Posterior vena cava (tissue), 2 donors: ENCODE measurements at regions of chr4 and their contacts with region 1.

Region 1: GRCh38 chr4:144295286-144295995 is 154.9 kb upstream of the GYPA start:
- DNase-seq: no peak

Region 2: GRCh38 chr4:143438710-143439109 is 856.7 kb before region 1 on chr4:
- intact Hi-C with region 1: loop called in 1 of 2 experiments (anchors 5 kb)
- DNase-seq: no peak

Region 3: GRCh38 chr4:144259285-144259684 is 36.2 kb before region 1 on chr4:
- intact Hi-C with region 1: no loop called
- DNase-seq: no peak

Region 4: DNA sequence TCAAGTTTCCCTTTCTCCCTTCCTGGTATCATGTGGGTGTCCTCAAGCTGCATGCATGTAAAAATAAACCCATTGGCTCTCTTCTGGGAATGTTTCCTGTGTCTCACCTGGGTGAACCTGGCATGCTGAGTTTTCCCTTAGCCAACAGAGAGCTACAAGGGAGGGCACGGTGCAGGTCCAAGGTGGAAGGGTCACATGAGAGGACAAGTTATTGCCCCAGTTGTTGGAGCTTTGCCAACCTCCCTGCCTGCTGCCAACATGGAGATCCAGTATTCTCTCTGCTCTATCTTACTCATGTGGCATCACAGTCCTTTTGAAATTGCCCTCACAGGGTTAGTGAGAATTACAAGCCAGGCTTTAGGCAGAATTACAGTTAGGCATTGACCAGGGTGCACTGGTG is 41.2 kb after region 1 on chr4:
- intact Hi-C with region 1: loop called in 1 of 2 experiments (anchors 1 kb)
- DNase-seq: no peak

Region 5: GRCh38 chr4:145019346-145019745 is 723.9 kb after region 1 on chr4:
- intact Hi-C with region 1: no loop called
- DNase-seq: no peak